ENCODE measurements at regions of chr5 and their contacts with region 1.

Region 1: DNA sequence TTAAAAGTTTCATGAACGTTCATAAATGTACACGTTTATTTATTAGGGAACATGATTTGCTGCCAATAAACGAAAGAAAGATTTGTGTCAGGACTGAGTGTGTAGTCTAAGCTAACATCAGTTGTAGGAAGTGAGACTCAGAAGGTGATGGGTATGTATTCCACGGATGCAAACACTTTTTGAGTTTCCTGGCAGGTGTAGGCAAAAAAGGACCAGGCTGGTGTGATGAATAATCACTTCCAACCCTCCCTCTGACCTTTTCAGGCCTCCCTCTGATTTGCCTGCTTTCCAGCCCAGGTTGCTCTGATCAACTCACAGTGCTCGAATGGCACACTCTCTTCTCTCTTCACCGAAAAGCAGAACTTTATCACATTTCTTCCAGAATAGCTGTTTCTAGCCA is 51.8 kb downstream of the BASP1 start:
- DNase-seq: no peak
- ATAC-seq: peak; percentile 73
- H3K4me3 Mint-ChIP-seq: peak overlapping the region; percentile 66
- H3K27ac Mint-ChIP-seq: peak overlapping the region; percentile 87
- H3K4me1 Mint-ChIP-seq: peaks cover 96% of the 10 kb centered on the region
- H3K27me3 Mint-ChIP-seq: no peaks in the 10 kb centered on the region
- CTCF ChIP-seq: no peak

Region 2: GRCh38 chr5:17228821-17229291 is 40.3 kb before region 1 on chr5:
- CTCF ChIA-PET with region 1: no interaction called
- POLR2A ChIA-PET with region 1: interaction called, 33 read pairs
- intact Hi-C with region 1: loop called (anchors 1 kb)
- DNase-seq: no peak
- ATAC-seq: peak; percentile 13
- H3K4me3 Mint-ChIP-seq: peak overlapping the region; percentile 63
- H3K27ac Mint-ChIP-seq: peak overlapping the region; percentile 92
- H3K4me1 Mint-ChIP-seq: peaks cover 92% of the 10 kb centered on the region
- H3K27me3 Mint-ChIP-seq: no peaks in the 10 kb centered on the region
- CTCF ChIP-seq: no peak

Measured in activated B cell treated with CpG ODN at 0.5 μM for 24 hours (primary cell).